Mammary epithelial cell (primary cell): ENCODE measurements at regions of chr16 and their contacts with region 1.

Region 1: GRCh38 chr16:13262270-13263090 is 361.1 kb downstream of the SHISA9 start:
- DNase-seq: no peak
- H3K4me3 ChIP-seq: no peak overlapping the region
- H3K27ac ChIP-seq: no peak overlapping the region
- H3K4me1 ChIP-seq: no peaks in the 10 kb centered on the region
- H3K27me3 ChIP-seq: no peaks in the 10 kb centered on the region
- CTCF ChIP-seq: no peak

Region 2: DNA sequence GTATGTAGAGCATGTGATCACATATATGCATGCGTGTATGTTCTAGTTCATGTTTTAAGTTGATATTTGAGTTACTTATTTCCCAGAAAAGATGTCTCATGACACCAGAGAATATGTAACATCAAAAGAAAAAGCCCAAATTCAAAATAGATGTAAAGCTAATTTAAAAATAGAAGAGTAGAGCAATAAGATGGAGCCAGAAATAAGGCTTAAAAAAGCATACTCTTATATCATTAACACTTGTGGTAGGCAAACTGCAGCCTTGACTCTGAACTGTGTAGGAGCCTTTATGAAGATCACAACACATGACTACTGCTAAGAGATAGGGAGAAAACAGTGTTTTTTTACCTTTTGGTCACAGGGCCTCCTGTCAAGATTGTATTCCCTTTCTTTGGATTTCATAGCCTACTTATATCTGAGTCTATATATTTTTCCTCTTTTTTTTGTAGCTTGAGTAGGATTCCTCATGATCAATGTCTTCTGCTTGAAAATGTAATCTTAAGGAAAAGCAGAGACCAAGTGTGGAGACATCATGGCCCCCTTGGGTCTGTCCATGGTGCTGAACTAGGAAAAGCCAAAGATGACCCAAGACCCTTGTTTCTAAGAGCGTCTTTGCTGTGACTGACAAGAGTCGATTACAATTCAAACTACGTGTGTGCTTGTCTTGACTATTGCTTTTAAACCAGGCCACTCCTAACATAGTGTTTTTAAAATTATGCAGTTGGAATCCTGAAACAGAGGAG is 29.3 kb after region 1 on chr16:
- CTCF ChIA-PET with region 1: no interaction called
- dilution Hi-C with region 1: no loop called
- in situ Hi-C with region 1: no loop called
- intact Hi-C with region 1: no loop called
- DNase-seq: no peak
- H3K4me3 ChIP-seq: no peak overlapping the region
- H3K27ac ChIP-seq: no peak overlapping the region
- H3K4me1 ChIP-seq: peaks cover 4% of the 10 kb centered on the region
- H3K27me3 ChIP-seq: no peaks in the 10 kb centered on the region
- CTCF ChIP-seq: no peak

Region 3: DNA sequence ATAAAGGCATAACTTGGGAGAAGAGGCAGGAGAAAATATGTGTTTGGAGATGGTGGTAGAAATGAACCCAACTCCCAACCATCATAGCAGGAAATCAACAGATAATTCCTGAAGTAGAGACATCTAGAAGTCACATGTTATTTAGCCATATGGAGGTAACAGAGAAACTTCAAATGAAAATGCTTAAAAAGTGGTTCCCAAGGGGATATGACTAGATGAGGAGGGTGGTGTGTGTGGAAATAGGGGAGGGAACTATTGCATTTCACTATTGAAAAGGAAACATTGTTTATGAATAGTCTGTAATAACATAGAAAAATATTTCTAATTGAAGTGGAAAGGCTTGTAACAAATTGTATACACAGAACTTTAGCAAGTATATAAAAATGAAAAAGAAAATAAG is 50.9 kb after region 1 on chr16:
- CTCF ChIA-PET with region 1: no interaction called
- dilution Hi-C with region 1: loop called (anchors 5 kb)
- in situ Hi-C with region 1: no loop called
- intact Hi-C with region 1: no loop called
- DNase-seq: no peak
- H3K4me3 ChIP-seq: no peak overlapping the region
- H3K27ac ChIP-seq: no peak overlapping the region
- H3K4me1 ChIP-seq: peaks cover 21% of the 10 kb centered on the region
- H3K27me3 ChIP-seq: no peaks in the 10 kb centered on the region
- CTCF ChIP-seq: no peak